Aorta (tissue), 5 donors: ENCODE measurements at regions of chr11 and their contacts with region 1.

Region 1: DNA sequence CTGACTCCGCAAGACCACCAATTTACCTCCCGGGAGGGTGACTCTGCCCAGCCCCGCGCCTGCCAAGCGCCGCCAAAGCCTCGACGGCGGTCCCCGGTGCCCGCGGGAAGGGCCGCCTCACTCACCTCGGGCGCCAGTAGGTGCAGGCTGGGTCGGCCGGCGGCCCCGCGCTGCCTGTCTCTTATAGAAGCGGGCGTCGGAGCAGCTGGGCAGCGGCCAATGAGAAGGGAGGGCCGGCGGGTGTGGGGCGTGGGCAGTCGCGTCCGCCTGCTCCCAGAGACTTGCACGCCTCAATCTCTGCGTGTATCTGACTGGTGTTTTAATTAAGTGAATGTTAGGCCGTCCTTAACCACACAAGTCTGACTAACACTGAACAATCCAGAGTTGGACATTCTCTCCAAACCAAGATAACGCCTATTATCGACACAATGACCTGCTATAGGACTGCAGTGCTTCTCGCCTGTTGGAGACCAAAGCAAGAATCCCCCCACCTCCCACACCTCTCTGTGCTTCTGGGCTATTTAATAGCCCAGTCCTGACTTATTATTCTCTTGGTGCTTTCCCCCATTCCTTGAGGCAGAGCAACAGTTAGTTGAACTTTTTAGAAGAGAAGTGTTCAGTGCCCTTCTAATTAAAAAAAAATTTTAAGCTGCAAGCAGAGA is at the start of gene TPH1:
- DNase-seq: peak; percentile 71 to 86
- ATAC-seq: peak; percentile 85
- H3K4me3 ChIP-seq: peak within 1 kb of the TSS; percentile 57 to 81
- H3K27ac ChIP-seq: peak within 1 kb of the TSS; percentile 67 to 68
- H3K4me1 ChIP-seq: no peaks in the 10 kb centered on the region
- H3K27me3 ChIP-seq: no peaks in the 10 kb centered on the region
- total RNA-seq, gene TPH1: 14.9 to 20.0 TPM

Region 2: DNA sequence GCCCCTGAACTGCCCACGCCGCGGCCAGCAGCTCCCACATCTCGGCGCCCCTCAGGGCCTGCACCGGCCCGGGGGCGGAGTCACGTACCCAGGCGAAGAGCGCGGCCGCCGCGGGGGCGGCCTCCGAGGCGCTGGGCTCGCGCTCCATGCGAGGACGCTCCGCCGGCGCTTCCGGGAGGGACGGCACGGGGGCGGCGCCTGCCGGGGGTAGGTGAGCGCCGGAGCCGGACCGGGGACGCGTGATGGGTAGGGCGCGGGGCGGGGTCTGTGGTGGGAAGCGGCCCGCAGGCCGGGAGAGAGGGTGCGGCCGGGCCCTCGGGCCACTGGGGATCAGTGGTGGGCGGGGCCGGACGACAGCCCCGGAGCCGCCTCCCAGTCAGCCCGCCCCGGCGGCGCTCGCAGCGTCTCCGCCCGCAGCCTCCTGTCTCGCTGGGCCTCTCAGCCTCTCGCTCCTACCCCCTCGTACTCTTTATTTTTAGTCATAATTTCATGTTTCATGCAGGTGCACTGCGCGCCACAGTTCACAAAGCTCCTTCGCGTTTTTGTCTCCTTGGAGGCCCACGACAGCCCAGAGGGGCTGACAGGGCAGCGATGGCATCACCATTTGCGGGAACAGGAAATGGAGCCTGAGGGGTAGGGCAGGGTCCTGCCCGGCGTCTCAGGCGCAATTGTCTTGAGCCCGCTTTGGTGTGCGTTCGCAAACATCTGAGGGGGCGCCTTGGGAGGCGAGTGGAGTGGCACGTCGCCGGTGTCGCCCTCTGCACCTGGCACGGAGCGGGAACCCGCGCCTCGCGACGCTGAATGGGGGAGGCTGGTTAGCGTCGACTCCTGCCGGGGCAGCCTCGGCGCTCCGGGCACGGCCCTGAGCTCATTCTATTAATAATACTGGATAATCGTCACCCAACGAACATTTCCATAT is 33.1 kb before region 1 on chr11 and contains the start of gene SERGEF:
- intact Hi-C with region 1: loop called in 1 of 2 experiments (anchors 5 kb)
- DNase-seq: peak; percentile 97 to 98
- ATAC-seq: peak; percentile 98
- H3K4me3 ChIP-seq: peak within 1 kb of the TSS; percentile 55 to 76
- H3K27ac ChIP-seq: peak within 1 kb of the TSS; percentile 49 to 63
- H3K4me1 ChIP-seq: no peaks in the 10 kb centered on the region
- H3K27me3 ChIP-seq: no peaks in the 10 kb centered on the region
- total RNA-seq, gene SERGEF: 43.1 to 48.3 TPM

Region 3: DNA sequence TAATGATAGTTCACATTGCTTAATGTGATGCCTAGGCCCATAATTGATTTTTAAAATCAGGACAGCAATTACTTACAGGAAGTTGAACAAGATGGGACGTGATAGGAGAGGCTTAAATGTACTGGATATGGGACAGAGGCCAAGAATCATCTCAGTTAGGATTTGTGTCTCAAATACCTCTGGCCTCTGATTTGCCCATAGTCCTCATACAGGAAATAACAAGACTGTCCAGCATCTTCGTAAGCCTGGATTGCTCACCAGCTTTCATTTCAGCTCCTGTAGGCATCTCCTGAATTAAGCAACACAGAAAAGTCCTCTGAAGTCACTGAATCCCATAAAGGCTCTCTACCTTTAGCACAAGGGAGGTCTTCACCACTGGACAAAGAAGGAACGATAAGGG is 86.1 kb after region 1 on chr11 and contains the start of gene MRGPRX3:
- intact Hi-C with region 1: no loop called
- DNase-seq: no peak
- ATAC-seq: no peak
- H3K4me3 ChIP-seq: no peak within 1 kb of the TSS
- H3K27ac ChIP-seq: no peak within 1 kb of the TSS
- H3K4me1 ChIP-seq: no peaks in the 10 kb centered on the region
- H3K27me3 ChIP-seq: no peaks in the 10 kb centered on the region
- total RNA-seq, gene MRGPRX3: not detected